ENCODE measurements at regions of chr5 and their contacts with region 1.

Region 1: DNA sequence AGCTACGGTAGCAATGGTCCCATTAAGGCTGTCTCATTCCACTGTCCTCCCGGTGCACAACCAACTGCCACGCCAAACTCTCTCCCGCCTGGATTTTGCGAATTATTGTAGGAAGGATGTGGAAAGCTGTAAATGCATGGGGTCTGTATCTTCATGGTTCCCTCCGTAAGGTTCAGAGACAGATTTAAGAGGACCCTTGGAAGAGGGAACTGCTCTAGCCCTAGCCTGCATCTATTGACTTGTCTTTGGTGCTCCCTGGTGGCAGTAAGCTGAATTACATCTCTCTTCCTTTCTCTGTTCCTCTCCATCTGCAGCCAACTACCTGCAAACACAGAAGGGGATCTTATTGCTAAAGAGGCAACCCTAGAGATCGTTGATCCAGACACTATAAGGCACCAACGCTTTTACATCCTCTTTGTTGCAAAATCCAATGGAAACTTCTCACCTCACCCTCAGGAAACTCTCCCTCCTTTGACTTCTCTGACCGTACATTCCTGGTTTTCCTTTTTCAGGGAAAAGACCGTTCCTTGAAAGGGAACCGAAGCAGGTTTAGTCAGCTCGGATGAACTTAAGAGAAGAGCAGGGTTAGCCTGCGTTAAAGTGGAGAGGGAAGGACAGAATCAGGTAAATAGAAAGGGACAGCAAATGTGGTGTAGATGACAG is 11.9 kb downstream of the CAPSL start:
- DNase-seq: peak; percentile 81
- ATAC-seq: peak; percentile 42
- H3K4me3 Mint-ChIP-seq: no peak overlapping the region
- H3K27ac Mint-ChIP-seq: no peak overlapping the region
- H3K4me1 Mint-ChIP-seq: peaks cover 26% of the 10 kb centered on the region
- H3K27me3 Mint-ChIP-seq: peaks cover 4% of the 10 kb centered on the region

Region 2: DNA sequence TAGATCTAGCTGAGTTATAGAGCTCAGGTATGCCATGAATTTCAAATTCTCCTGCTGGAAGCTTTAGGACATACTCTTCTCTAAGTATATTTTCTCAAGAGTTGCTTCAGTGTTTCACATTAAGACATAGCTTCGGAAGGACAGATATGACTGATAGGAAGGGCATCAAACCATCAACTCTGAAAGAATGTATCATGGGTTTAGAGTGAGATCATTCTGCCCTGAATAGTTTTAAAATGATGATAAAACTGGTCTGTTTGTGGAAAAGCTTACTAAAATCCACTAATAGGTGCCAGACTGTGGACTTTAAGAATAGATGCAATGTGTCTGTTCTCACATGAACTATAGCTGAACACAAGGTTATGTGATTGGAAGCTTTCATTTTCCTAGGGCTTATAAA is 300.4 kb before region 1 on chr5:
- CTCF ChIA-PET with region 1: interaction called, 11 read pairs
- POLR2A ChIA-PET with region 1: no interaction called
- DNase-seq: no peak
- ATAC-seq: no peak
- H3K4me3 Mint-ChIP-seq: no peak overlapping the region
- H3K27ac Mint-ChIP-seq: no peak overlapping the region
- H3K4me1 Mint-ChIP-seq: peaks cover 6% of the 10 kb centered on the region
- H3K27me3 Mint-ChIP-seq: no peaks in the 10 kb centered on the region

Region 3: GRCh38 chr5:35656721-35657120 is 269.8 kb before region 1 on chr5:
- CTCF ChIA-PET with region 1: interaction called, 168 read pairs
- POLR2A ChIA-PET with region 1: interaction called, 7 read pairs
- DNase-seq: no peak
- ATAC-seq: no peak
- H3K4me3 Mint-ChIP-seq: no peak overlapping the region
- H3K27ac Mint-ChIP-seq: no peak overlapping the region
- H3K4me1 Mint-ChIP-seq: peaks cover 14% of the 10 kb centered on the region
- H3K27me3 Mint-ChIP-seq: no peaks in the 10 kb centered on the region

Region 4: GRCh38 chr5:35754481-35754880 is 172.0 kb before region 1 on chr5:
- CTCF ChIA-PET with region 1: no interaction called
- POLR2A ChIA-PET with region 1: no interaction called
- DNase-seq: no peak
- ATAC-seq: no peak
- H3K4me3 Mint-ChIP-seq: no peak overlapping the region
- H3K27ac Mint-ChIP-seq: no peak overlapping the region
- H3K4me1 Mint-ChIP-seq: peaks cover 7% of the 10 kb centered on the region
- H3K27me3 Mint-ChIP-seq: no peaks in the 10 kb centered on the region

Region 5: DNA sequence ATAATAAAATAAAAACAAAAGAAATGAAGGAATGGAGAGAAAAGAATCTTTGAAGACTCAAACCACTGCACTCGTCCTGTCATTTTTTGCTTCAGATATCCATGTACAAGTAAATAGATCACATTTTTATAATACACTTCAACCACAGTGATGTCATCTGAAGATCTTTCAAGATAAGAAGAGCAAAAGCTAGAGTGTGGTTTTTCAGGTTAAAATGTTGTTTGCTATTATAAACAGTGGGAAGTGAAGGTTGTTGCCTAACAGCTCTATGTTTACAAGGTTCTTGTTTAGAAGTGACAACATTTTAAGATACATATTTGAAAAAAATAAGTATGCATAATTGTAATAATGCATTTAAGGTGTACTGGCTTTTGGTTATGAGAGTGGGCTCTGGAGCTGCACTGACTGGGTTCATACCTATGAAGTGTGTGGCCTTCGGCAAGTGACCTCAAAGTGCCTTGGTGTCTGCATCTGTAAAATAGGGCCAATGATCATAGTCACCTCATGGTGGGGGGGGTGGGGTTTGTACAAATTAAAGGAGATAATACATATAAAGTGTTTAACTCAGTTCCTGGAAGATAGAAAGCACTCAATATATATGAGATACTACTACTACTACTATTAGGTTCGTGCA is 115.3 kb before region 1 on chr5:
- CTCF ChIA-PET with region 1: interaction called, 26 read pairs
- POLR2A ChIA-PET with region 1: no interaction called
- DNase-seq: peak; percentile 61
- ATAC-seq: peak; percentile 80
- H3K4me3 Mint-ChIP-seq: peak overlapping the region; percentile 22
- H3K27ac Mint-ChIP-seq: peak overlapping the region; percentile 84
- H3K4me1 Mint-ChIP-seq: peaks cover 39% of the 10 kb centered on the region
- H3K27me3 Mint-ChIP-seq: no peaks in the 10 kb centered on the region

Region 6: DNA sequence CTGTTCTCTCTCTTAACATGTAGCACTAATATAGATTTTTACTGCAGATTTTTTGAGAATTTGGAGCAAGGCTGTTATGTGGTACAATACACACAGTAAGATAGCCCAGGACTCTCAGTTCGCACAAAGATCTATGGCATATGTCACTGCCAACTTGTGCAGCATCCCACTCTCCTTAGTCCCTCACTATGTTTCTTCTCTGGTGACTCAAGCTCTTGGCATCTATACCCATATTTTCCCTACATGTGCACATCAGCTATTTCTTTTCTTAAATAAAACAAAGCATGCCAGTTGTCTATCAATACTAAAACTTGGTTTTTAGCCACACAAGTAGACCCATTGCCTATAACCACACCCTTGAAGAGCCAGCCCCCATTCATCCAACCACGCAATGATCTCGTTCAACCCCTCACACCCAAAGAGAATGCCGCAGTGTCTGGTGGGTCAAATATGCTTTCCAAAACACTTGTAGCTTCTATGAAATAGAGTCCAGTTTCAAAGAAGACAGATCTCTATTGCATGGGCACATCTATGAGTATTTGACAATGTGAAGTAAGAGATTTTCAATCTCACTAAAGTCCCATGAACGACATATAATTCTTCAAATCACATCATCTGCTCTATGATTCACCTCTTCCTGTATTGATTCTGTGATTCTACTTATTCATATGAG is 88.0 kb before region 1 on chr5:
- CTCF ChIA-PET with region 1: no interaction called
- POLR2A ChIA-PET with region 1: no interaction called
- DNase-seq: no peak
- ATAC-seq: peak; percentile 38
- H3K4me3 Mint-ChIP-seq: no peak overlapping the region
- H3K27ac Mint-ChIP-seq: peak overlapping the region; percentile 23
- H3K4me1 Mint-ChIP-seq: peaks cover 51% of the 10 kb centered on the region
- H3K27me3 Mint-ChIP-seq: no peaks in the 10 kb centered on the region

Region 7: GRCh38 chr5:35852084-35852734 is 74.3 kb before region 1 on chr5:
- CTCF ChIA-PET with region 1: interaction called, 26 read pairs
- POLR2A ChIA-PET with region 1: interaction called, 3 read pairs
- DNase-seq: peak; percentile 49
- ATAC-seq: peak; percentile 6
- H3K4me3 Mint-ChIP-seq: peak overlapping the region; percentile 72
- H3K27ac Mint-ChIP-seq: peak overlapping the region; percentile 94
- H3K4me1 Mint-ChIP-seq: peaks cover 75% of the 10 kb centered on the region
- H3K27me3 Mint-ChIP-seq: no peaks in the 10 kb centered on the region

Region 8: DNA sequence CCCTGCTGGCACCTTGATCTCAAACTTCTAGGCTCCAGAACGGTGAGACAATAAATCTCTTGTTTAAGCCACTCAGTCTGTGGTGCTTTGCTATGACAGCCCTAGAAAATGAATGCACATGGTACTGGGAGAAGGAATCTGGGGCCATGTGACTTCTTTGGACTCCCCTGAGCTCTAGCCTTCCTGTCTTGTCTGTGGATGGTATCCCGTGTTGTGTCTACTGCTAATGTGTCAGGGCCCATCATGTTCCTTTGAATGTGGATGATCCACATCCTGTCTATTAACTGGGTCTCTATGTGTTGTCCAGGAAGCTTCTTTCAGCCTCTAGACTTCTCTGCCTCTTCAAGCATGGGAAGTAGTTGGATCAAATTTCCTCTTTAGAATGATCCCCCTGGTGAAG is 44.8 kb before region 1 on chr5:
- CTCF ChIA-PET with region 1: interaction called, 13 read pairs
- POLR2A ChIA-PET with region 1: no interaction called
- DNase-seq: no peak
- ATAC-seq: no peak
- H3K4me3 Mint-ChIP-seq: no peak overlapping the region
- H3K27ac Mint-ChIP-seq: no peak overlapping the region
- H3K4me1 Mint-ChIP-seq: peaks cover 58% of the 10 kb centered on the region
- H3K27me3 Mint-ChIP-seq: no peaks in the 10 kb centered on the region

Region 9: GRCh38 chr5:36017004-36017403 is 90.5 kb after region 1 on chr5:
- CTCF ChIA-PET with region 1: no interaction called
- POLR2A ChIA-PET with region 1: no interaction called
- DNase-seq: no peak
- ATAC-seq: no peak
- H3K4me3 Mint-ChIP-seq: no peak overlapping the region
- H3K27ac Mint-ChIP-seq: no peak overlapping the region
- H3K4me1 Mint-ChIP-seq: no peaks in the 10 kb centered on the region
- H3K27me3 Mint-ChIP-seq: peaks cover 2% of the 10 kb centered on the region

Measured in activated CD8-positive, alpha-beta T cell treated with anti-CD3 and anti-CD28 coated beads, Interleukin-2, amount 10 ng/mL, durations not matched to agents 7 days and 5 days (primary cell).